ENCODE measurements at regions of chr2 and their contacts with region 1.

Region 1: DNA sequence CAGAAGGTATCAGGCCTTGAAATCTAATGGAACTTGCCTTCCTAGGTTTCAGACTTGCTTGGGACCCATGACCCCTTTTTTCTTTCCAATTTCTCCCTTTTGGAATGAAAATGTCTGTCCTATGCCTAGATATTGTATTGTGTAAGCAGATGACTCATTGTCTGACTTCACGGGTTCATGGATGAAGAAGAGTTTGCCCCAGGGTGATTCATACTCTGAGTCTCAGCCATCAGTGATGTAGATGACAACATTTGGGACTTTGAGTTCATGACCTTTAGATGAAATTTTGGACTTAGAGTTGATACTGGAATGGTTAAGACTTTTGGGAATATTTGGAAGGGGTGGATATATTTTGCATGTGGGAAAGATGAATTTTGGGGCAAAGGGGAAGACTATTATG is 11.2 kb upstream of the SCYGR5 start:
- H3K4me3 Mint-ChIP-seq: no peak overlapping the region
- H3K27ac Mint-ChIP-seq: no peak overlapping the region
- H3K4me1 Mint-ChIP-seq: peaks cover 5% of the 10 kb centered on the region
- H3K27me3 Mint-ChIP-seq: peaks cover 4% of the 10 kb centered on the region

Region 2: DNA sequence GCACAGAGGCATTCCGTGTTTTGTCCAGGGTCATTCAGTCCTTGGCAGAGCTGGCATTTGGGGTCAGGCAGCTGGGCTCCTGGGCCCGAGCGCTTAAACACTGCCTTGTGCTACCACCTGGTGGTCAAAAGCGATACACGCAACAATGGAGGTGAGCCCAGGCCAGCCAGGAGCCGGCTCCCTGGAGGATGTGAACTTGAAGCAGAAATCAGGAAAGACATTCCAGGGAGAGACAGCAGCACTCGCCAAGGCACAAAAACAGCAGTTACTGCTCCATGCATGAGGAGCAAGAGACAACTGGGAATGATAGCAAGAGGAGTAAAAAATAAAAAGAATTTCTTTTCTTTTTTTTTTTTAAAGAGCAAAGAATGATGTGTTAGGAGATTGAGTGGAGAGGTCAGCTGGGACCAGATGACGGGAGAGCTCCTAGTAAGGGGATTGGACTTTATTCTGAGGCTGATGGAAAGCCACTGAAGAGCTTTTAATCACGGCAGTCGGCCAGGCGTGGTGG is 111.0 kb after region 1 on chr2:
- intact Hi-C with region 1: loop called (anchors 2 kb)
- H3K4me3 Mint-ChIP-seq: no peak overlapping the region
- H3K27ac Mint-ChIP-seq: no peak overlapping the region
- H3K4me1 Mint-ChIP-seq: peaks cover 5% of the 10 kb centered on the region
- H3K27me3 Mint-ChIP-seq: no peaks in the 10 kb centered on the region

Region 3: GRCh38 chr2:227862227-227862740 is 206.8 kb after region 1 on chr2:
- intact Hi-C with region 1: loop called (anchors 1 kb)
- H3K4me3 Mint-ChIP-seq: no peak overlapping the region
- H3K27ac Mint-ChIP-seq: no peak overlapping the region
- H3K4me1 Mint-ChIP-seq: no peaks in the 10 kb centered on the region
- H3K27me3 Mint-ChIP-seq: peaks cover 11% of the 10 kb centered on the region

Region 4: DNA sequence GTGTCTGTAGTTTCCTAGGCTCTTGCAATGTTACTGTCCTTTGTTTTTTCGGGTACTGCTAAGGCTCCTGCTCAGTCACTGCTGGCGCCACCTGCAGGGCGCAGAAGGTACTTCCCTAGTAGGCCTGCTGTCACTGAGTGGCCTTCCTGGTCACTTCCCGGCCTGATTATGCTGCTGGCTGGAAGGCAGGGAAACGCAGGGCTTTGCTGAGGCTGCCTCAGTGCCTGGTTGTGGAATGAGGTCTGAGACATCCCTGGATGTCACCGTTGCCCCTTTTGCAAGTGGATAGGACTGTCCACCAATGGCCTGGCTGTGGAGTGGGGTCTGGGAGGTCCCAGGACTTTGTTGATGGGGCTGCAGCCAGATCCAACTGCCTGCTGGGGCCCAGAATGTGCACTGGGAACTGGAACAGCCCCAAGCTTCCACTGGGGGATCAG is 229.1 kb after region 1 on chr2:
- intact Hi-C with region 1: loop called (anchors 1 kb)
- H3K4me3 Mint-ChIP-seq: no peak overlapping the region
- H3K27ac Mint-ChIP-seq: no peak overlapping the region
- H3K4me1 Mint-ChIP-seq: peaks cover 5% of the 10 kb centered on the region
- H3K27me3 Mint-ChIP-seq: peaks cover 3% of the 10 kb centered on the region

Region 5: DNA sequence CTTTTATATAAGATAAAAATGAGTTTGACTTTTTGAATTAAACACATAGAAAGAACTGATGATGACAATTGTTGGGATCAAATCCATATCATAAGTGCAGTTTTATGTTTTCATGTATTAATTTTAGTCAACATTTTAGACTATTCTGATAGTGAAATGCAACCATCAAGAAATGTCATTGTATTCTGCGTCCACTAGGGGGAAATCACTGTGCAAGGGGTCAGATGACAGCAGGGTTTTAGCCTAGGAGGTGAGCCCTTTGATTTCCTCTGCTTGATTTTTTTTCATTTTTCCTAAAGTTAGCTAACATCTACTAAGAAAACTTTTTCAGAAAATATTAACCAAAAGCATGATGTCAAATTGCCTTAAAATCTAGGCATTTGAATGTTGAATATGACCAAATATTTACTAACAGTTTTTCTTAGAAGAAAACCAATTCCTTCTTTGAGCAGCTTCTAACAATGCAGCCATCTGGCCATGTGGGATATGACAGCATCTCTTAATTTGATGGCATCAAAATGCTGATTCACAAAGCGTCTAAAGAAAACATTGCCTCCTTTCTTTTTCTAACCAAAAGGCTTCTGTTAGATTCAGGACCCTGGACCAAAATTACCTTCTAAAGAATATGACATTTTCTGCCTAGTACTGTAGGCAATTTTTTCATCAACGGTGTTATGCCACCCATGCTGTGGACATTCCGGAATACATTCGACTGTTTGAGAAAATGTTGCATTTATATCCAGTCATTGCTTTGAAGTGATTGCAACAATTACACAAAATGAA is 384.5 kb after region 1 on chr2:
- intact Hi-C with region 1: no loop called
- H3K4me3 Mint-ChIP-seq: no peak overlapping the region
- H3K27ac Mint-ChIP-seq: no peak overlapping the region
- H3K4me1 Mint-ChIP-seq: no peaks in the 10 kb centered on the region
- H3K27me3 Mint-ChIP-seq: no peaks in the 10 kb centered on the region